ENCODE measurements at regions of chr5 and their contacts with region 1.

Region 1: GRCh38 chr5:62779010-62779422 is 200.4 kb downstream of the LRRC70 start:
- DNase-seq: no peak
- H3K4me3 Mint-ChIP-seq: no peak overlapping the region
- H3K27ac Mint-ChIP-seq: no peak overlapping the region
- H3K4me1 Mint-ChIP-seq: peaks cover 3% of the 10 kb centered on the region
- H3K27me3 Mint-ChIP-seq: peaks cover 5% of the 10 kb centered on the region

Region 2: GRCh38 chr5:62450259-62450658 is 328.8 kb before region 1 on chr5:
- CTCF ChIA-PET with region 1: interaction called, 17 read pairs
- POLR2A ChIA-PET with region 1: no interaction called
- DNase-seq: no peak
- H3K4me3 Mint-ChIP-seq: no peak overlapping the region
- H3K27ac Mint-ChIP-seq: no peak overlapping the region
- H3K4me1 Mint-ChIP-seq: no peaks in the 10 kb centered on the region
- H3K27me3 Mint-ChIP-seq: no peaks in the 10 kb centered on the region

Measured in activated CD4-positive, alpha-beta memory T cell treated with anti-CD3 and anti-CD28 coated beads, Interleukin-2, amount 10 ng/mL, durations not matched to agents 7 days and 5 days (primary cell).